ENCODE measurements at regions of chr12 and their contacts with region 1.

Region 1: DNA sequence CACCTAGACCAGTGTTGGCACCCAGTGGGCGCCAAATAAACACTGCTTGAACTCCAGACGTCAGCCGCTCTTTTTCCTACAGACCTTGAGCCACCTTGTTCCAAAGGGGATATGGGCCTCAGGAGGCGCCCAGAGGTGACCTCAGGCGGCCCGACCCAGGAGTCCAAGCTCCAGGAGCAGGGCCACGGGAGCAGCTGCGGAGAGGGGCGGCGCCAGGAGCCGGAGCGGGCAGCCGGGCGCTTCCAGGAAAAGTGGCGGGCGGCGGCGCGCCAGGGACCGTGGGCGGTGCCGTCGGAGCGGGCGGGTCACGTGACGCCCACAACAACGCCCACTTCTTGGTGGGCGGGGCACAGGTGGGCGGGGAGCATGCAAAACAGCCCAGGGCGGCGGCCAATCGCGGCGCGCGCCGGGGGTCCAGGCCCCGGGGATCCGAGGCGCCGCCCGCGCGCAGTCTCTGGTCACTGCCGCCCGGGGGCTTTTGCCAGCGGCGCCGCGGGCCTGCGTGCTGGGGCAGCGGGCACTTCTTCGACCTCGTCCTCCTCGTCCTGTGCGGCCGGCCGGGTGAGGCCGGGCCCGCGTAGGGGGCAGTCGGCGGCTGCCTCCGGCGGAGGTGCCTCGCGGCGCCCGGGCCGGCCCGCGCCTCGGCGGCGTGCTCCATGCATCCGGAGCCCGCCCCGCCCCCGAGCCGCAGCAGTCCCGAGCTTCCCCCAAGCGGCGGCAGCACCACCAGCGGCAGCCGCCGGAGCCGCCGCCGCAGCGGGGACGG is at the start of gene ORAI1:
- DNase-seq: peak; percentile 85 to 99 (median 92)

Region 2: DNA sequence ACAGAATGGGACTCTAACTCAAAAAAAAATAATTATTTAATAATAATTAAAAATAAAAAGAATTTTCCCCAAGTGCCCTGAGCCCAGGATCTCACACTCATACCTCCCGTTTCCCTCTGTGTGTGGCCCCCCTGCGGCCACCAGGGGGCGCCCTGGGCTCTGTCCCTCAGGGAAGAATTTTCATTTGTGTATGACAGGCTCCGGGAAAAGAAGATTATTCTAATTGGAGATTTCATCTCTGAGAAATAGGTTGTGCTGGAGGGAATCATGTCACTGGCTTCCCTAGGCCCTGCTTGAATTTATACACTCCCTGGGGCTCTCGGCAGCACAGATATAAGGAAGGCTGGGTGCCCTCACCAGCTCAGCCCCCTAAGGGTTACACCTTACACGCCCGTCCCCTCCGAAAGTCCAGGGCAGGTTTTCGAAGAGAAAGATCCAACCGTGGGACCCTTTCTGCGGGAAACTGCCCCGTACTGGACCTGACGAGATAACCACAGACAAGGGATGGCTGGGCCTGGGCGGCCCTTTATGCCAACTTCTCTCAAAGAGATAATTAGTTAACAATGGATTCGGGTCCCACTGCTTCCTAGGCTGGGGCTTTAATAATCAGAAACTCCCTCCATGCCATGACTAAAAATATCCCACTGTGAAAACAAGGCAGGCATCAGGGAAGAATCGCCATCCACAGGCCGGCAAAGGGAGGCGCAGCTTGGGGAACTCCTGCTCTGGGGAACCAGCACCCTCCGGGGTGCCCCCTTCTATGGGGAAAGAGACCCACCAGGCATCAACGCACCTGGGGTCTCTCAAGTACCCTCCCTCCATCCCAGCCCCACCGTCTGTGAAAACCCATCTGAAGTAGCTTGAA is 126.1 kb before region 1 on chr12:
- intact Hi-C with region 1: loop called (anchors 2 kb)
- DNase-seq: peak; percentile 69 to 98 (median 86)

Region 3: DNA sequence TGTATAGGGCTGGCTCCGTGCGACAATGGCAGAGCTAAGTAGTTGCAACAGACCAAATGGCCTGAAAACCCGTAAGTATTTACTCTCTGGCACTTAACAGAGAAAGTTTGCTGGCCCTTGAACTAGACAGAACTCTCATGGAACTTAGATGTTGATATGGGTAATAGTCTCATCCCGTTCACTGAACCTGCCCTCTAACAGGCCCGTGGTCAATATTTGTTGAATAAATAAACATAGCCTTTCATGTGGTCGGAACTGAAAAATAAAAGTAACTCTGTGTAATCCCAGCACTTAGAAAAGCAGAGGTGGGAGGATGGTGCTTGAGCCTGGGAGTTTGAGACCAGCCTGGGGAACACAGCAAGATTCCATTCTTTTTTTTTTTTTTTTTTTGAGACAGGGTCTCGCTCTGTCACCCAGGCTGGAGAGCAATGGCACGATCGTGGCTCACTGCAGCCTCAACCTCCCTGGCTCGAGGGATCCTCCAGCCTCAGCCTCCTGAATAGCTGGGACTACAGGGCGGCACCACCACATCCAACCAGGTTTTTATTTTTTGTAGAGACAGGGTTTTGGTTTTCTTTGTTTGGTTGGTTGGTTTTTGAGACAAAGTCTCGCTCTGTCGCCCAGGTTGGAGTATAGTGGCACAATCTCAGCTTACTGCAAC is 75.2 kb before region 1 on chr12:
- intact Hi-C with region 1: loop called (anchors 2 kb)
- DNase-seq: no peak

Region 4: DNA sequence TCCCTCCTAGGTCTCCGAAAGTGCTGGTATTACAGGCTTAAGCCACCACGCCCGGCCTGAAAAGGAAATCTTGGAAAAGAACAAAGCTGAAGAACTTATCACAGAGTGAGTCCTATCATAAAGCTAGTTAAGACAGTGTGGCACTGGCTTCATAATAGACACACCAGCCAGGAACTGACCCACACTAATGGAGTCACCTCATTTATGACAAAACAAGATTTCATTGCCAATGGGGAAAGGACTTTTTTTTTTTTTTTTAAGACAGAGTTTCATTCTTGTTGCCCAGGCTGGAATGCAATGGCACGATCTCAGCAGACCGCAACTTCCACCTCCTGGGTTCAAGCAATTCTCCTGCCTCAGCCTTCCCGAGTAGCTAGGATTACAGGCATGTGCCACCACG is 61.2 kb before region 1 on chr12:
- intact Hi-C with region 1: no loop called
- DNase-seq: no peak

Region 5: DNA sequence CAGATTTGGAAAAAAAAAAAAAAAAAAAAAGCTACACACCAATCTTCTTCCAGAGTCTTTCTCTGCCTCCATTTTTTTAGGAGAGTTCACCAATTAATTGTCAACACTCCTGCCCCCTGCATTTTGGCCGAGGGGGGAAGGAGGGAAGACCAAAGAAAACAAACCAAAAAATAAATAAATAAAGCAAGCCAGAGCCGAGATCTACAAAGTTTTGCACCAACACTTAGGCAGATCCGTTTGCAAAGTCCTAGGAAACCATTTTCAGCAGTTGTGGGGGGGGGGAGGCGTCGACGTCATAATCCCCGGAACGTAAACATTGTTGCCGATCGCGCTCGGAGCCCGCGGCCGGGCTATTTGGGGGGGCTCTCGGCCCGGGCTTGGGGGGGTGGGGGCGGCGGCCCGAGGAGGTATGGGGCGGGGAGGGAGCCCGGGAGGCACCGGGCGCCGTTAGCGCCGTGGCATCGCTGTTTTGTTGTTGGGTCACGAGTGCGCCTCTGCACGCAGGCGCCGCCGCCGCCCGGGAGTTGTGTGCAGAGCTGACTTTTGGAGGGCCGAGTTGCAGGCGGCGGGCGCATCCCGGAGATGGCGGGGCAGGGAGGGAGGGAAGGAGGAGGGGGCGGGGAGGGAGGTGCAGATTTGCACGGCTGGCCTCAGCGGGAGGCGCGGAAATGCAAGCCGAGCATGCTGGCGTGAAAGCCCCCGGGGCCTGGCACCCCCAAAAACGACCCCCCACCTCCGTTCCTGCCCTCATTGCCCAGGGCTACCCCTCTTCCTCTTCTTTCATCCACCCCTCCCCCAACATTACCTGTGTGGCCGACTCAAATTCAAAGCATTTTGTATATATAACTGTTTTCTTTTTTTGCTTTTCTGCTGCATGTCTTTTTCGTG is 46.0 kb before region 1 on chr12:
- intact Hi-C with region 1: loop called (anchors 2 kb)
- DNase-seq: peak; percentile 61 to 96 (median 76)

Region 6: GRCh38 chr12:121678716-121679580 is 52.7 kb after region 1 on chr12:
- intact Hi-C with region 1: loop called (anchors 5 kb)
- DNase-seq: no peak